Posterior cingulate gyrus (tissue), 11 donors: ENCODE measurements at regions of chr9 and their contacts with region 1.

Region 1: DNA sequence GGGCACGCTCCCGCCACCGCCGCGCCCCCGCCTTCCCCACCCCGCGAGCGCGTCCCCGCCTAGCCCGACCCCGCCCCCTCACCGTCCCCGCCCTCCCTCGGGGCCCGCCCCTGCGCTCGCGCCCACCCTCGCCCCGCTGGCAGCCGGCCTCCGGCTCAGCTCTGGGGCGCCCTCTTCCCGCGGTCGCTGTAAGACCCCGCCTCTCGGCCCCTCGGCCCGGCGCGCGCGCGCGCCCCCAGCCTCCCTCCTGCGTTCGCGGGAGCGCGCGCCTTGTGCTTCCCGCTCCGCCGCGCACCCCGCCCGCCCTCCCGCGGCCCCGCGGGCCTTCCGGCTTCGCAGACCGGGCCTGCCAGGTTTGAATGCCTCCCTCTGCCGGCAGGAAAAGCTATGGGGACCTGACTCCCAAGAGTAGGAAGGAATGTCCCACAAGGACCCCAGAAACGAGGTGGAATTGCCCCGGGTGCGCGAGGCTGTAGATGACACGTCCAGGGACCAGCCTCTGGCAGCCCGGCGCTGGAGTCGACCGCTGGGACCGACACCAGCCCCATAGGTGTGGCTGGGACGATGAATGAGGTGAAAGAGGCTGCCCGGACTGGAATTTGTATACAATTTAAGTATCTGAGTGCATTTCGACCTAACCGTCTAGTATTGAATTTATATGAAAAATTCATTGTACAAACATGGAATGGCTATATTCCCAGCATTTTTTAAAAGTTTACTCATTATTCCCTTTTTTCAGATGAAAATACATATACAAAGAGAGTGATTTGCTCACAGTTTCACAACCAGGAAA is 416 bp upstream of the PTBP3 start:
- DNase-seq: peak in 9 of 10 donors; percentile 82 to 99 (median 88)

Region 2: DNA sequence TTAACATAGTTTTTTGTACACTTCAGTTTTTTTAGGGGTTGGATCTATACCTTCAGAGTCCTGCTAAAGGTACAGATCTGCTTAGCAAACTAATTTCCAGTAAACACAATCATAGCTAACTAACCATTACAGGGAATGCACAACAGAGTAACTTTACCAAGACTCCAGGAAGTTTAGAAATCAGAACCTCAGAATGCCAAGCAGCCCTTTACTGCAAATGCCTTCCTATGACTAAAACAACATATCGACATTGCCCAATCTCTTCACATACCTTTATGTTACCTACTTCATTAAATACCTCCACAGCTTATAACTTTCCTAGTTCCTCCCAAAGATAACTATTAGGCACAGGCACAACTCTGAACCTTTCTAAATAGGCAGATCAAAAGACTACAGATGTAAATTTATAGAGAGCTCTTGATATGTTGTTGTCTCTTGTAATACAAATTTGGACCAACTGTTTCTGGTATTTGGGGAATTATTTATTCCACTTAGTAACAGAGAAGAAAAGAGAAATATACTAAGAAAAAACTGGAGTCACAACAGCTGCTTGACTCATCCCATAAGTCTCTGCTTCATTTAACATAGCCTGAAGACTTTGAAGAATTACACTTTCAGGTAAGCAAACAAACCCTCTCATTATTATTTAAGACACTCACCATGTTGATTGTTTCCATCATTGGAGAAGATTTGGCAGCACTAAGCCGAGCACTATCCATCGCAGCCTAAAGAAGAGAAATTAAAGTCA is 957.8 kb before region 1 on chr9:
- intact Hi-C with region 1: no loop called
- DNase-seq: no peak

Region 3: GRCh38 chr9:111896353-111896958 is 437.4 kb before region 1 on chr9 and contains the start of gene UGCG:
- intact Hi-C with region 1: loop called (anchors 2 kb)
- DNase-seq: peak; percentile 72 to 99 (median 86)

Region 4: GRCh38 chr9:112097712-112098688 is 235.8 kb before region 1 on chr9:
- intact Hi-C with region 1: loop called (anchors 10 kb)
- DNase-seq: peak in 6 of 10 donors; percentile 23 to 91 (median 55)